ENCODE measurements at regions of chr18 and their contacts with region 1.

Region 1: GRCh38 chr18:4251873-4252272 is 203.2 kb downstream of the DLGAP1 start:
- DNase-seq: no peak
- ATAC-seq: no peak
- H3K4me3 ChIP-seq: no peak overlapping the region
- H3K27ac ChIP-seq: no peak overlapping the region
- H3K4me1 ChIP-seq: no peaks in the 10 kb centered on the region
- H3K27me3 ChIP-seq: no peaks in the 10 kb centered on the region
- CTCF ChIP-seq: no peak
- POLR2A ChIP-seq: no peak
- RAD21 ChIP-seq: no peak

Region 2: DNA sequence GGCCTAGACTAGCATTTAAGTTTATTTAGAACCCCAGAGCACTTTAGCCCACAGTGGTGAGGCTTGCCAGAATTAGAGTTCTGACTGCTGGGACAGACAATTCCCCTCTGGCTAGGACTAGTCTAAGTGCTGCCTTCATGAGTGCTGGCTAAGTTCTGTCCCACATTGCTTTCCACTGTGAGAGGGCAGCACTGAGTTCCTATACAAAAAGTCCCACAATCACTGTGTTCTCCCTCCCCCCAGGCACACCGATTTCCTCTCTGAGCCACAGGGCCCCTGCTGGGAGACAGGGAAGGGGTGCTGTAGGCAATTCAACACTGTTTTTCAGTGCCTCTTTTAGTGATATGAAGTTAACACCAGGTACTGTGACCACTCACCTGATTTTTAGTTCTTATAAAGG is 107.7 kb before region 1 on chr18:
- CTCF ChIA-PET with region 1: no interaction called
- POLR2A ChIA-PET with region 1: no interaction called
- dilution Hi-C with region 1: no loop called
- in situ Hi-C with region 1: no loop called
- intact Hi-C with region 1: no loop called
- DNase-seq: no peak
- ATAC-seq: no peak
- H3K4me3 ChIP-seq: no peak overlapping the region
- H3K27ac ChIP-seq: no peak overlapping the region
- H3K4me1 ChIP-seq: no peaks in the 10 kb centered on the region
- H3K27me3 ChIP-seq: no peaks in the 10 kb centered on the region
- CTCF ChIP-seq: no peak
- POLR2A ChIP-seq: no peak
- RAD21 ChIP-seq: no peak

Region 3: DNA sequence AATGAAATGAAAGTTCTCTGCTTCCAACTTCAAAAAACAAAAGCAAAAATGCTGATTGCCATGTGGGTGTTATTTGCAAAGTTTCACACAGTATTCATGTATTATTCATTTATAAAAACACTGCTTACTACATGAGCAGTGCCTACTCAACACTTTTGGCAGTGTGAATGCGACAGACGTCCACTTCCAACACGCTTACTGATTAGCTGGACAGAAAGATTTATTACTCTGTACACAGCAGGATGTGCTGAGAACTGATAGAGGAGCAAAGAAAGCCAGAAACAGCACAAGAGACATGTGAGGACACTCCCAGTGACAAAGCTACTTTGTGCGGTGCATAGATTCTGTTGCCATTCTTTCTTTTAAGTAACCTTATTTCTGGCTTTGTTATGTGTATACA is 55.5 kb before region 1 on chr18:
- CTCF ChIA-PET with region 1: no interaction called
- POLR2A ChIA-PET with region 1: no interaction called
- dilution Hi-C with region 1: no loop called
- in situ Hi-C with region 1: loop called (anchors 10 kb)
- intact Hi-C with region 1: no loop called
- DNase-seq: no peak
- ATAC-seq: no peak
- H3K4me3 ChIP-seq: no peak overlapping the region
- H3K27ac ChIP-seq: no peak overlapping the region
- H3K4me1 ChIP-seq: no peaks in the 10 kb centered on the region
- H3K27me3 ChIP-seq: no peaks in the 10 kb centered on the region
- CTCF ChIP-seq: no peak
- POLR2A ChIP-seq: no peak
- RAD21 ChIP-seq: no peak

Region 4: GRCh38 chr18:4207383-4207985 is 44.4 kb before region 1 on chr18:
- CTCF ChIA-PET with region 1: no interaction called
- POLR2A ChIA-PET with region 1: no interaction called
- dilution Hi-C with region 1: no loop called
- in situ Hi-C with region 1: no loop called
- intact Hi-C with region 1: no loop called
- DNase-seq: no peak
- ATAC-seq: no peak
- H3K4me3 ChIP-seq: no peak overlapping the region
- H3K27ac ChIP-seq: no peak overlapping the region
- H3K4me1 ChIP-seq: no peaks in the 10 kb centered on the region
- H3K27me3 ChIP-seq: no peaks in the 10 kb centered on the region
- CTCF ChIP-seq: no peak
- POLR2A ChIP-seq: no peak
- RAD21 ChIP-seq: no peak

Region 5: GRCh38 chr18:4691836-4692235 is 440.0 kb after region 1 on chr18:
- CTCF ChIA-PET with region 1: no interaction called
- POLR2A ChIA-PET with region 1: no interaction called
- dilution Hi-C with region 1: no loop called
- in situ Hi-C with region 1: no loop called
- intact Hi-C with region 1: no loop called
- DNase-seq: no peak
- ATAC-seq: no peak
- H3K4me3 ChIP-seq: no peak overlapping the region
- H3K27ac ChIP-seq: no peak overlapping the region
- H3K4me1 ChIP-seq: no peaks in the 10 kb centered on the region
- H3K27me3 ChIP-seq: no peaks in the 10 kb centered on the region
- CTCF ChIP-seq: no peak
- POLR2A ChIP-seq: no peak
- RAD21 ChIP-seq: no peak

Measured in IMR-90 (cell line).